ENCODE measurements at regions of chr3 and their contacts with region 1.

Region 1: GRCh38 chr3:13452490-13453335 is 27.4 kb upstream of the HDAC11 start:
- DNase-seq: peak in 8 of 9 experiments; percentile 7 to 77 (median 50)
- ATAC-seq: peak; percentile 19
- H3K4me3 ChIP-seq: peak overlapping the region; percentile 6 to 69
- H3K4me3 Mint-ChIP-seq: peak overlapping the region; percentile 96
- H3K27ac ChIP-seq: peak overlapping the region; percentile 28 to 73
- H3K27ac Mint-ChIP-seq: peak overlapping the region; percentile 95
- H3K4me1 ChIP-seq: peaks cover 18% of the 10 kb centered on the region
- H3K4me1 Mint-ChIP-seq: peaks cover 19% of the 10 kb centered on the region
- H3K27me3 ChIP-seq: no peaks in the 10 kb centered on the region
- H3K27me3 Mint-ChIP-seq: no peaks in the 10 kb centered on the region
- CTCF ChIP-seq: peak; percentile 83

Region 2: DNA sequence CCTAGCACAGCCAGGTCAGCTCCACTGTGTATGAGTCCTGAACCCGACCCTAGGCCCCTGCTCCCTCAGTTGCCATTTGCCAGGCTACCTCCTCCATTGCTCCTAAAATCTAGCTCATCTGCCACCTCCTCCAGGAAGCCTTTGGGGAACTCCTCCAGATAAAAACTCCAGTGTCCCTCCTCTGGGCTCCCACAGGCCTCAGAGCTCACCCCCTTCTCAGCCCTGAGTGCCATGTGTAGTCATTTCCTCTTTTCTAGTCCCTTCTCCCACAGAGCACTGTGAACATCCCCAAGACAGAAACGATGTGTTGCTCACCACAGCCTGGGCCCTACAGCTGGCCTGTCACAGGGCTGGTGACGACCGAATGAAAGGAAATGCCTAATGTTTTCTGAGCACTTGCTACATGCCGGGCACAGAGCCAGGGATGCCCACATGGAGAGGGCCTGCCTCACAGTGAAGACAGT is 440.5 kb before region 1 on chr3:
- CTCF ChIA-PET with region 1: no interaction called
- POLR2A ChIA-PET with region 1: no interaction called
- intact Hi-C with region 1: loop called in 1 of 2 experiments (anchors 10 kb)
- DNase-seq: peak in 5 of 9 experiments; percentile 41 to 89 (median 70)
- ATAC-seq: peak; percentile 17
- H3K4me3 ChIP-seq: peak overlapping the region; percentile 4 to 12
- H3K4me3 Mint-ChIP-seq: peak overlapping the region; percentile 67
- H3K27ac ChIP-seq: peak overlapping the region; percentile 74 to 98
- H3K27ac Mint-ChIP-seq: peak overlapping the region; percentile 97
- H3K4me1 ChIP-seq: peaks cover 96% of the 10 kb centered on the region
- H3K4me1 Mint-ChIP-seq: peaks cover 80% of the 10 kb centered on the region
- H3K27me3 ChIP-seq: no peaks in the 10 kb centered on the region
- H3K27me3 Mint-ChIP-seq: no peaks in the 10 kb centered on the region
- CTCF ChIP-seq: no peak

Region 3: GRCh38 chr3:13346481-13347389 is 106.0 kb before region 1 on chr3:
- CTCF ChIA-PET with region 1: interaction called, 131 read pairs
- POLR2A ChIA-PET with region 1: interaction called, 30 read pairs
- intact Hi-C with region 1: loop called (anchors 1 kb)
- DNase-seq: peak; percentile 53 to 91 (median 75)
- ATAC-seq: peak; percentile 90
- H3K4me3 ChIP-seq: peak overlapping the region in 1 of 2 experiments; percentile 14
- H3K4me3 Mint-ChIP-seq: peak overlapping the region; percentile 42
- H3K27ac ChIP-seq: peak overlapping the region; percentile 18 to 55
- H3K27ac Mint-ChIP-seq: peak overlapping the region; percentile 88
- H3K4me1 ChIP-seq: peaks cover 49% of the 10 kb centered on the region
- H3K4me1 Mint-ChIP-seq: peaks cover 61% of the 10 kb centered on the region
- H3K27me3 ChIP-seq: no peaks in the 10 kb centered on the region
- H3K27me3 Mint-ChIP-seq: no peaks in the 10 kb centered on the region
- CTCF ChIP-seq: peak; percentile 44

Region 4: GRCh38 chr3:13391308-13391707 is 61.4 kb before region 1 on chr3:
- CTCF ChIA-PET with region 1: interaction called, 100 read pairs
- POLR2A ChIA-PET with region 1: interaction called, 13 read pairs
- intact Hi-C with region 1: loop called in 1 of 2 experiments (anchors 1 kb)
- DNase-seq: peak in 7 of 9 experiments; percentile 13 to 55 (median 48)
- ATAC-seq: peak; percentile 38
- H3K4me3 ChIP-seq: no peak overlapping the region
- H3K4me3 Mint-ChIP-seq: no peak overlapping the region
- H3K27ac ChIP-seq: no peak overlapping the region
- H3K27ac Mint-ChIP-seq: no peak overlapping the region
- H3K4me1 ChIP-seq: peaks cover 17% of the 10 kb centered on the region
- H3K4me1 Mint-ChIP-seq: peaks cover 21% of the 10 kb centered on the region
- H3K27me3 ChIP-seq: no peaks in the 10 kb centered on the region
- H3K27me3 Mint-ChIP-seq: no peaks in the 10 kb centered on the region
- CTCF ChIP-seq: no peak

Region 5: DNA sequence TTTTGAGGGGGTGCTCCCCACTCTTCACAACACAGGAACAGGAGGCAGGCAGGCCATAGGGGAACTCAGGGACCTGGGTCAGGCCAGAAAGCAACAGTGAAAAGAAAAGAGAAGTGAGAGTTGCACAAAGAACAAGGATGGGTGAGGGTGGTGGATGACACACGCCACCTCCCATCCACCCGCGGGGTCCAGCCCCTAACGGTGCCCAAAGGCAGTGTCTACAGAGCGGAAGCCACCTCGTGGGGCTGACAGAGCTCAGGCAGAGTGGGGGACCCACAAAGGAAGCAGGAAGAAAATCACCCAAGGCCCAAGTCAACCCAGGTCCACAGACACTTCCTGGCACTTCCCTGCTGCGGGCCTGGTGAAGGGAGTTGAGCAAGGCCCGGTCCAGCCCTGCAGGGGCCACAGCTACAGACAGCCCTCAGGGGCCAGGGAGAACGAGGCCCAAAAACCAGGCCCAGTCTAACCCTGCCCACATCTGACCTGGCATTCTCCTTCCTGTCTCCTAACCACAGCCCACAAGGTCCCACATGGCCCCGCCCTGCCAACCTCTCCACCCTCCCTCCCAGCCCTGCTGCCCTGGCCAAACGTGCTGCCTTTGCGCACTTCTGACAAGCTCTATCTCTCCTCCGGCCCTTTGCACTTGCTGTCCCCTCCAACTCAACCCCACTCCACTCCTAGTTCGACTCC is 38.5 kb before region 1 on chr3:
- CTCF ChIA-PET with region 1: interaction called, 117 read pairs
- POLR2A ChIA-PET with region 1: interaction called, 47 read pairs
- intact Hi-C with region 1: loop called in 1 of 2 experiments (anchors 2 kb)
- DNase-seq: peak; percentile 48 to 91 (median 79)
- ATAC-seq: peak; percentile 91
- H3K4me3 ChIP-seq: peak overlapping the region; percentile 19 to 29
- H3K4me3 Mint-ChIP-seq: peak overlapping the region; percentile 75
- H3K27ac ChIP-seq: peak overlapping the region; percentile 51 to 89
- H3K27ac Mint-ChIP-seq: peak overlapping the region; percentile 96
- H3K4me1 ChIP-seq: peaks cover 60% of the 10 kb centered on the region
- H3K4me1 Mint-ChIP-seq: peaks cover 69% of the 10 kb centered on the region
- H3K27me3 ChIP-seq: no peaks in the 10 kb centered on the region
- H3K27me3 Mint-ChIP-seq: no peaks in the 10 kb centered on the region
- CTCF ChIP-seq: no peak

Region 6: DNA sequence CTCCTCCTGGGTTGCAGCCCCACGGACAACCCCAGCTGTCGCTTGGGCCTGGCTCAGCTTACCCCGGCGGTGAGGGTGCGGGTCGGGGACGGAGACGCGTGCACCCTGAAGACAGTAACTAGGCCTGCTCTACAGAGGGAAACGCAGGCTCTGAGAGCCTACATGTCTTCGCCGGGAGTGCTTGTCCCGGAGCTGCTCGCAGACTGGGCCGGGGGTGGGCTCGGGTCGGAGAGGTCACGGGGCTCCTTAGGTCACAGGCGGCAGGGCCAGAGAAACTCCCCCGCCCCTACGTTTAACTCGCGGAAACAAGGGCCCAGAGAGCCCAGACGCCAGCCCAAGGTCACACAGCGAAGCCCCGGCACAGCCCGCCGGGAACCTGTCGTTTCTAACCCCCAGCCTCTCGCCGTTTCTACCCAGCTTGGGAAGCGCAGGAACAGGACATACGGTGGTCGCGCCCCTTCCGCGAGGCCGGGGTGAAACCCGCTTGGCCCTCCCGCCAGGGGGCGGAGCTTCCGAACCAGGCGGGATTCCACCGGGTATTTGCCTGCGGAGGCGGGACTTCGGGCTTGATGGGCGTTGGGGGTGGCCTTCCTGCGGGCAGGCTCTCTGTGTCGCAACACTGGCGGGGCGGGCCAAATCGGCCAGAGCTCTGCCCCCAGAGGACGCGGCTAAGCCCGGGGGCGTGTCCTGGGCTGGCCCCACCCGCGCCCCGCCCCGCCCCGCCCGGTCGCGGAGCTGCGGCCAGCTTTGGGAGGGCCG is 27.0 kb after region 1 on chr3 and contains the start of gene HDAC11:
- CTCF ChIA-PET with region 1: interaction called, 16 read pairs
- POLR2A ChIA-PET with region 1: interaction called, 18 read pairs
- intact Hi-C with region 1: loop called (anchors 1 kb)
- DNase-seq: peak; percentile 95 to 99 (median 98)
- ATAC-seq: peak; percentile 93
- H3K4me3 ChIP-seq: peak within 1 kb of the TSS; percentile 83 to 96
- H3K4me3 Mint-ChIP-seq: peak within 1 kb of the TSS; percentile 95
- H3K27ac ChIP-seq: peak within 1 kb of the TSS; percentile 90
- H3K27ac Mint-ChIP-seq: peak within 1 kb of the TSS; percentile 96
- H3K4me1 ChIP-seq: peaks cover 18% of the 10 kb centered on the region
- H3K4me1 Mint-ChIP-seq: peaks cover 17% of the 10 kb centered on the region
- H3K27me3 ChIP-seq: no peaks in the 10 kb centered on the region
- H3K27me3 Mint-ChIP-seq: no peaks in the 10 kb centered on the region
- CTCF ChIP-seq: no peak
- total RNA-seq, gene HDAC11: 4.6 to 5.8 TPM

Region 7: DNA sequence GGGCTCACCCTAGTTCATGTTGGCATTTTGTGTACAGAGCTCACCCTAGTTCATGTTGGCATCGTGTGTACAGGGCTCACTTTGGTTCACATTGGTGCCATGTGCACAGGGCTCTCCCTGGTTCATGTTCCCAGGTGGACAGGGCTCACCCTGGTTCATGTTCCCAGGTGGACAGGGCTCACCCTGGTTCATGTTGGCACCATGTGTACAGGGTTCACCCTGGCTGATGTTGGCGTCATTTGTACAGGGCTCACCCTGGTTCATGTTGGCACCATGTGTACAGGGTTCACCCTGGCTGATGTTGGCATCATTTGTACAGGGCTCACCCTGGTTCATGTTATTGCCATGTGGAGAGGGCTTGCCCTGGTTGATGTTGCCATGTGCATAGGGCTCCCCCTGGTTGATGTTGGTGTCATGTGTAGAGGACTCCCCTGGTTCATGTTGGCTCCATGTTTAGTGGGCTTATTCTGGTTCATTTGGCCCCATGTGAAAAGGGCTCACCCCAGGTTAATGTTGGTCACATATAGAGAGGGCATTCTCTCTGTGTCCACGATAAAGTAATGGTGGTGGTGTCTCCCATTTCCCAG is 1463.0 kb after region 1 on chr3:
- CTCF ChIA-PET with region 1: no interaction called
- POLR2A ChIA-PET with region 1: no interaction called
- intact Hi-C with region 1: no loop called
- DNase-seq: peak in 5 of 9 experiments; percentile 17 to 60 (median 27)
- ATAC-seq: peak; percentile 31
- H3K4me3 ChIP-seq: no peak overlapping the region
- H3K4me3 Mint-ChIP-seq: no peak overlapping the region
- H3K27ac ChIP-seq: no peak overlapping the region
- H3K27ac Mint-ChIP-seq: no peak overlapping the region
- H3K4me1 ChIP-seq: peaks cover under 1% of the 10 kb centered on the region
- H3K4me1 Mint-ChIP-seq: no peaks in the 10 kb centered on the region
- H3K27me3 ChIP-seq: no peaks in the 10 kb centered on the region
- H3K27me3 Mint-ChIP-seq: peaks cover 2% of the 10 kb centered on the region
- CTCF ChIP-seq: no peak

Measured in CD8-positive, alpha-beta T cell (primary cell).